ENCODE measurements at regions of chr2 and their contacts with region 1.

Region 1: GRCh38 chr2:189466660-189467059 is 25.4 kb downstream of the WDR75 start:
- DNase-seq: no peak
- H3K4me3 ChIP-seq: no peak overlapping the region
- H3K27ac ChIP-seq: no peak overlapping the region
- H3K4me1 ChIP-seq: peaks cover 15% of the 10 kb centered on the region
- H3K27me3 ChIP-seq: no peaks in the 10 kb centered on the region
- CTCF ChIP-seq: peak; percentile 78

Region 2: GRCh38 chr2:189150033-189150432 is 316.6 kb before region 1 on chr2:
- intact Hi-C with region 1: no loop called
- DNase-seq: no peak
- H3K4me3 ChIP-seq: no peak overlapping the region
- H3K27ac ChIP-seq: peak overlapping the region; percentile 59
- H3K4me1 ChIP-seq: peaks cover 38% of the 10 kb centered on the region
- H3K27me3 ChIP-seq: no peaks in the 10 kb centered on the region
- CTCF ChIP-seq: no peak

Region 3: DNA sequence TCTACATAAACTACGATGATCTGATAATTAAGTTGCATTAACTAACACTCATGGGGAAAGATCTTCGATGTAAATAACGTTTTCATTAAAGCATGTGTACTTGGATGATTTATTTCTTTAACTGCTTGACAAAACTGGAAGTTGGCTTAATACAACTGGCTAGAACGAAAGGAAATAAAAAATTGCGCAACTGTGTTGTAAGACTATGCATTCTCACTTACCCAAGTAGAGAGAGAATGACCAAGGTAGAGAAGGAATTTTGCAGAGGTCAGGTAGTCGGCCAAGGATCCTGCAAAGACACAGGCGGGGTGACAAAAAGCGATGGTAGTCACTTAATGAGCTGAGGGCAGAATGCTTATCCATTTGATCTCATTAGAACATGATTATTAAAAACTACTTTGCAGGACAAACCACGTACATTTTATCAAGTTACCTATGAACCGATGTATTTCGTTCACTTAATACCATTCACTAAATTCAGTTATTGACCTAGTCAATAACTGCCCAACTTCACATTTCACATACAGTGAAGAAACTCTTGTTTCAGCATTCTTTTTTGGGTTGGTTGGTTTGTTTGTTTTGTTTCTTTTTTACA is 113.0 kb after region 1 on chr2:
- intact Hi-C with region 1: loop called (anchors 10 kb)
- DNase-seq: no peak
- H3K4me3 ChIP-seq: peak overlapping the region; percentile 86
- H3K27ac ChIP-seq: peak overlapping the region; percentile 99
- H3K4me1 ChIP-seq: peaks cover 73% of the 10 kb centered on the region
- H3K27me3 ChIP-seq: no peaks in the 10 kb centered on the region
- CTCF ChIP-seq: no peak

Region 4: GRCh38 chr2:189628817-189629530 is 162.3 kb after region 1 on chr2:
- intact Hi-C with region 1: loop called (anchors 10 kb)
- DNase-seq: no peak
- H3K4me3 ChIP-seq: no peak overlapping the region
- H3K27ac ChIP-seq: peak overlapping the region; percentile 48
- H3K4me1 ChIP-seq: peaks cover 4% of the 10 kb centered on the region
- H3K27me3 ChIP-seq: no peaks in the 10 kb centered on the region
- CTCF ChIP-seq: peak; percentile 48

Measured in left ventricle myocardium inferior (tissue), 1 donor.